Activated CD8-positive, alpha-beta memory T cell treated with anti-CD3 and anti-CD28 coated beads, Interleukin-2, amount 10 ng/mL, durations not matched to agents 7 days and 5 days (primary cell): ENCODE measurements at regions of chr16 and their contacts with region 1.

Region 1: GRCh38 chr16:4517812-4518680 is 20.5 kb downstream of the CDIP1 start:
- DNase-seq: no peak
- ATAC-seq: no peak
- H3K4me3 Mint-ChIP-seq: no peak overlapping the region
- H3K27ac Mint-ChIP-seq: peak overlapping the region; percentile 39
- H3K4me1 Mint-ChIP-seq: peaks cover 40% of the 10 kb centered on the region
- H3K27me3 Mint-ChIP-seq: no peaks in the 10 kb centered on the region

Region 2: GRCh38 chr16:4435337-4436067 is 82.5 kb before region 1 on chr16:
- CTCF ChIA-PET with region 1: no interaction called
- DNase-seq: no peak
- ATAC-seq: no peak
- H3K4me3 Mint-ChIP-seq: no peak overlapping the region
- H3K27ac Mint-ChIP-seq: no peak overlapping the region
- H3K4me1 Mint-ChIP-seq: peaks cover 15% of the 10 kb centered on the region
- H3K27me3 Mint-ChIP-seq: no peaks in the 10 kb centered on the region

Region 3: GRCh38 chr16:4538350-4539235 is 20.5 kb after region 1 on chr16 and contains the start of gene CDIP1:
- CTCF ChIA-PET with region 1: interaction called, 13 read pairs
- DNase-seq: peak; percentile 97
- ATAC-seq: peak; percentile 85
- H3K4me3 Mint-ChIP-seq: peak within 1 kb of the TSS; percentile 67
- H3K27ac Mint-ChIP-seq: peak within 1 kb of the TSS; percentile 72
- H3K4me1 Mint-ChIP-seq: peaks cover 37% of the 10 kb centered on the region
- H3K27me3 Mint-ChIP-seq: no peaks in the 10 kb centered on the region
- total RNA-seq, gene CDIP1: 45.2 to 57.3 TPM